Astrocyte of the cerebellum (primary cell): ENCODE measurements at regions of chr12 and their contacts with region 1.

Region 1: GRCh38 chr12:53079226-53080117 is at the start of gene SPRYD3:
- DNase-seq: peak; percentile 85
- H3K4me3 ChIP-seq: peak within 1 kb of the TSS; percentile 62
- CTCF ChIP-seq: no peak

Region 2: GRCh38 chr12:53131844-53132243 is 52.4 kb after region 1 on chr12:
- in situ Hi-C with region 1: loop called (anchors 5 kb)
- DNase-seq: no peak
- H3K4me3 ChIP-seq: no peak overlapping the region
- CTCF ChIP-seq: no peak

Region 3: GRCh38 chr12:53190108-53190729 is 110.7 kb after region 1 on chr12:
- in situ Hi-C with region 1: loop called (anchors 10 kb)
- DNase-seq: peak; percentile 18
- H3K4me3 ChIP-seq: no peak overlapping the region
- CTCF ChIP-seq: peak; percentile 92

Region 4: DNA sequence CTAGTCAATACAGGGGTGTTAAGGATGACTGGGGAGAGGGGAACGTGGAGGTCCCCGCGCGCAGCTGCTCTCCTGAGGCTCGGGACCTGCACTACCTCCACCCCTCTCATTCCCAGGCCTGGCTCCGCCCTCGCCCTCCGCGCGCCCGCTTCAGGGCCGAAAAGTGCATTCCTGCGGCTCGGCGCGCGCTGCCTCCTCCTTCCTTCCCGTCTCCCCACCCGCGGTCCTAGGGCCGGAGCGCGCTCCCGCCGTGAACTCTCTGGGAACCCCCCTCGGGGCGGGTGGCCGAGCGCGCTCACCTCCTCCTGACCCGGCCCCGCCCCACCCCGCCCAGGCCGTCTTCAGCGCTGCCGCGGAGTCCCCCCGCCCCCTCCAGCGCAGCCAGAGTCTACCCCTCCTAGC is 141.3 kb after region 1 on chr12:
- in situ Hi-C with region 1: no loop called
- DNase-seq: peak; percentile 71
- H3K4me3 ChIP-seq: peak overlapping the region; percentile 74
- CTCF ChIP-seq: no peak